Endothelial cell of umbilical vein (primary cell): ENCODE measurements at regions of chr17 and their contacts with region 1.

Region 1: DNA sequence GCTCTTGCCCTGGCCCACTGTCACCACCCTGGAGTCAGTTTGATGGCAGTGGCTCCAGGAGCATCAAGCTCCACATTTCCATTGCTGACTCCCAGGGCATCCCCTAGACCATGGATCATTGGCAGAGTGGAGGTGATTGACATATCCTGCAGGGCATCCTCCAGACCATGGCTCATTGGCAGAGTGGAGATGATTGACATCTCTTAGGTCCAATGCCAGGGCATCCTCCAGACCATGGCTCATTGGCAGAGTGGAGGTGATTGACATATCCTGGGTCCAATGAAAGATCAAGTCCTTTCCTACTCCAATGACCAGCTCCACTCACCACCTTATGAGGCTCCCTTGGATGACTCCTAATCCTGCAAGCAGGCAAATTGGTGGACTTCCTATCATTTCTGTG is 174.3 kb upstream of the NLRP1 start:
- DNase-seq: peak; percentile 82
- H3K4me3 ChIP-seq: no peak overlapping the region
- H3K27ac ChIP-seq: no peak overlapping the region
- H3K4me1 ChIP-seq: peaks cover 15% of the 10 kb centered on the region
- H3K27me3 ChIP-seq: no peaks in the 10 kb centered on the region
- CTCF ChIP-seq: no peak
- POLR2A ChIP-seq: no peak

Region 2: DNA sequence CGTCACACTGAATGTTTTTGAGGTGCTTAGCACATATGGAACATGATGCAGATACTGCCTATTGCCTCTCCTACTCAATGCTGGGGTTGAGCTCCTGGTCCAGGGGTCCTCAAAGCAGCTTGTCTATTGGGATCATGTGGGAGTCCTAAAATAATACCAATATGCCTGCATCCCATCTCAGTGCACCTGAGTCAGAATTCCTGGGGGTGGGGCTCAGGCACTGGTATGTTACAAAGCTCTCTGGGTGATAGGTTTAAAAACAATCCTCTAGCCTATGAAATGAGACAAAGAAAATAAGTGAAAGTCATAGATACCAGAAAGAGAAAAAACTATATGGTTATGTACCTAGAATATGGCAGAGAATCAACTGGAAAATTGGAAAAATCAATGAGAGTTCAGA is 17.7 kb before region 1 on chr17:
- CTCF ChIA-PET with region 1: no interaction called
- POLR2A ChIA-PET with region 1: no interaction called
- dilution Hi-C with region 1: no loop called
- intact Hi-C with region 1: no loop called
- DNase-seq: no peak
- H3K4me3 ChIP-seq: no peak overlapping the region
- H3K27ac ChIP-seq: no peak overlapping the region
- H3K4me1 ChIP-seq: no peaks in the 10 kb centered on the region
- H3K27me3 ChIP-seq: peaks cover 2% of the 10 kb centered on the region in 2 experiments
- CTCF ChIP-seq: no peak
- POLR2A ChIP-seq: no peak

Region 3: DNA sequence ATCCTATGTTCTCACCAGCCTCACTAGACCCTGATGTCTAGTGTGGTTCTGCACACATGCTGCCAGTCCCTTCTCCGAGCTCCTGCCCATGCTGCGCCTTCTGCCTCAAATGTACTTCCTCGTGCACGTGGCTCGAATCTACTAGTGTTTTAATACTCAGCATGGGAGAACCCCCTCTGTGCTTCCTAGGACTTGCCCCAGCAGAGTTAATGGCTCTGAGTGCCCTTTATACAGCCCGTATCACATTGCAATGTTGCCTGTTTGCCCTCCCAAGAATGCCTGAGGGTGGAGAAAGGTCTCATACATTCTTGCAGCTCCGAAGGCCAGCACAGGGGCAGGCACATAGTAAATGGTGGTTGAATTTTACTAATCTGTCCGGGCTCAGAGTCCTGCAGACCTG is 16.4 kb after region 1 on chr17:
- CTCF ChIA-PET with region 1: interaction called, 12 read pairs
- POLR2A ChIA-PET with region 1: interaction called, 6 read pairs
- dilution Hi-C with region 1: no loop called
- intact Hi-C with region 1: no loop called
- DNase-seq: no peak
- H3K4me3 ChIP-seq: no peak overlapping the region
- H3K27ac ChIP-seq: no peak overlapping the region
- H3K4me1 ChIP-seq: peaks cover 1% of the 10 kb centered on the region
- H3K27me3 ChIP-seq: no peaks in the 10 kb centered on the region
- CTCF ChIP-seq: no peak
- POLR2A ChIP-seq: no peak

Region 4: GRCh38 chr17:5785867-5786509 is 27.3 kb after region 1 on chr17:
- CTCF ChIA-PET with region 1: no interaction called
- POLR2A ChIA-PET with region 1: interaction called, 3 read pairs
- dilution Hi-C with region 1: no loop called
- intact Hi-C with region 1: loop called (anchors 2 kb)
- DNase-seq: peak; percentile 48
- H3K4me3 ChIP-seq: no peak overlapping the region
- H3K27ac ChIP-seq: peak overlapping the region; percentile 62
- H3K4me1 ChIP-seq: peaks cover 17% of the 10 kb centered on the region
- H3K27me3 ChIP-seq: no peaks in the 10 kb centered on the region
- CTCF ChIP-seq: peak in 1 of 2 donors; percentile 6
- POLR2A ChIP-seq: no peak

Region 5: DNA sequence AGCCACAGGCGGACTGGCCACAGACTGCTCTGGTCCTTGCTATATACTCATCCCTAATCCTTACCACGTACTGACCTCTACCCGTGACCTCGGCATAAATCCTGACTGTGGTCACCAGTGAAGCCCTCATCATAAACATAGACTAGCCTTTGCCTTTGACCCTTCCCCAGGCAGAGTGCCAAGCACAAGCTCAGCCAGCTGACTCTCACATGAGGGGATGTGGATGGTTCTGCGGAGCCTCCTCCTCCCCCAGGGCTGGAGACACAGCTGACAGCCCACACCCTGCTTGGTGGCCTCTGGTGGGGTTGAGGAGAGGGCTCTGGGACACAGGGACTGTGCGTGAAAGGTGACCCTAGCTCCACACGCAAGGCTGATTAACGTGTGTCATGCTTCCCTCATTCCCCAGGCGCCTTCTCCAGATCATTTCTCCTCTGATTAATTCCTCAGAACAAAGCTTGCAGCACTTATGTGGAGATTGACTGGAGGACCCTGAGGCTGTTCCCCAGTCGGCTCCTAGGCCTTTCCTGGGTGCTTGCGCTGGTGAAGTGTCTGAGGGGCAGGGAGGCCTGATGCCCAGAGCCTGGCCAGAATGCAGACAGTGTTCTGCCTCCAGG is 67.2 kb after region 1 on chr17:
- CTCF ChIA-PET with region 1: no interaction called
- POLR2A ChIA-PET with region 1: no interaction called
- dilution Hi-C with region 1: no loop called
- intact Hi-C with region 1: loop called (anchors 2 kb)
- DNase-seq: peak; percentile 86
- H3K4me3 ChIP-seq: no peak overlapping the region
- H3K27ac ChIP-seq: peak overlapping the region; percentile 79
- H3K4me1 ChIP-seq: peaks cover 43% of the 10 kb centered on the region
- H3K27me3 ChIP-seq: no peaks in the 10 kb centered on the region
- CTCF ChIP-seq: no peak
- POLR2A ChIP-seq: peak; percentile 6